ENCODE measurements at regions of chr11 and their contacts with region 1.

Region 1: GRCh38 chr11:75667831-75668450 is 897 bp downstream of the MAP6 start:
- DNase-seq: no peak
- H3K4me3 ChIP-seq: peak overlapping the region; percentile 49 to 73
- H3K27ac ChIP-seq: peak overlapping the region; percentile 63
- H3K4me1 ChIP-seq: peaks cover 16% of the 10 kb centered on the region
- H3K27me3 ChIP-seq: no peaks in the 10 kb centered on the region
- CTCF ChIP-seq: no peak
- POLR2A ChIP-seq: no peak

Region 2: GRCh38 chr11:75554258-75555022 is 113.5 kb before region 1 on chr11:
- intact Hi-C with region 1: loop called (anchors 10 kb)
- DNase-seq: peak in 1 of 2 donors; percentile 97
- H3K4me3 ChIP-seq: peak overlapping the region; percentile 14 to 28
- H3K27ac ChIP-seq: peak overlapping the region; percentile 84
- H3K4me1 ChIP-seq: peaks cover 46% of the 10 kb centered on the region
- H3K27me3 ChIP-seq: no peaks in the 10 kb centered on the region
- CTCF ChIP-seq: no peak
- POLR2A ChIP-seq: peak in 1 of 2 donors; percentile 44

Region 3: GRCh38 chr11:75582895-75583717 is 84.8 kb before region 1 on chr11:
- intact Hi-C with region 1: no loop called
- DNase-seq: no peak
- H3K4me3 ChIP-seq: peak overlapping the region; percentile 75
- H3K27ac ChIP-seq: peak overlapping the region; percentile 99
- H3K4me1 ChIP-seq: peaks cover 30% of the 10 kb centered on the region
- H3K27me3 ChIP-seq: no peaks in the 10 kb centered on the region
- CTCF ChIP-seq: peak in 2 of 3 experiments; percentile 22 to 23
- POLR2A ChIP-seq: peak in 1 of 2 donors; percentile 54

Region 4: DNA sequence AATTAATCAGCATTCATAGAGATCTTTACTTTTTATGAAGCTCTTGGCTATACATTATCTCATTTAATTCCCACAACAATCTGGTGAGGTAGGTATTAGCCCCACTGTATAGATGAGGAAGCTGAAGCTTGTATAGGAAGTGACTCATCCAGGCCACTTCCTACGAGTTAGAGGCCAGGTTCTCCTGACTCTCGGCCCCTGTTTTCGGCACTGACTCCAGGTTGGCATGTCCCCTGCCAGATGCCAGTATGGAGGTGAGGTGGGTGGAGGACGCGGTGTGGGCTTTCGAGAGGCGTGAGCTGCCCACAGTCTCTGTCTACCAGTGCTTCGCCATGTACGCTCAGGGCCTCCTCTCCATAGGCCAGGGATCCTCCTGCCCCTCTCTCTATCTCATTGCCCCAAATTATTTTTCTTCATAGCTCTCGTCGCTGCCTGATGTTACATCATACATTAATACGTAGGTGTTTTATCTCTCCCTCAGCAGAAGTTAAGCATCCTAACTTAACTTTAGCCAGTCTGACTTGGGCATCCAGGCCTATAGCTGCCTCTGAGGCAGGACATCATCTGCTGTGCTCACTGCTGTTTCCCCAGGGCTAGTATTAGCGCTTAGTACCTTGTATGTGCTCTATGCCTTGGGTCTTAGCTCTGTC is 109.6 kb after region 1 on chr11:
- intact Hi-C with region 1: no loop called
- DNase-seq: no peak
- H3K4me3 ChIP-seq: no peak overlapping the region
- H3K27ac ChIP-seq: no peak overlapping the region
- H3K4me1 ChIP-seq: no peaks in the 10 kb centered on the region
- H3K27me3 ChIP-seq: no peaks in the 10 kb centered on the region
- CTCF ChIP-seq: no peak
- POLR2A ChIP-seq: no peak

Measured in vagina (tissue), 2 donors.